Spleen (tissue), 13 donors: ENCODE measurements at regions of chr20 and their contacts with region 1.

Region 1: DNA sequence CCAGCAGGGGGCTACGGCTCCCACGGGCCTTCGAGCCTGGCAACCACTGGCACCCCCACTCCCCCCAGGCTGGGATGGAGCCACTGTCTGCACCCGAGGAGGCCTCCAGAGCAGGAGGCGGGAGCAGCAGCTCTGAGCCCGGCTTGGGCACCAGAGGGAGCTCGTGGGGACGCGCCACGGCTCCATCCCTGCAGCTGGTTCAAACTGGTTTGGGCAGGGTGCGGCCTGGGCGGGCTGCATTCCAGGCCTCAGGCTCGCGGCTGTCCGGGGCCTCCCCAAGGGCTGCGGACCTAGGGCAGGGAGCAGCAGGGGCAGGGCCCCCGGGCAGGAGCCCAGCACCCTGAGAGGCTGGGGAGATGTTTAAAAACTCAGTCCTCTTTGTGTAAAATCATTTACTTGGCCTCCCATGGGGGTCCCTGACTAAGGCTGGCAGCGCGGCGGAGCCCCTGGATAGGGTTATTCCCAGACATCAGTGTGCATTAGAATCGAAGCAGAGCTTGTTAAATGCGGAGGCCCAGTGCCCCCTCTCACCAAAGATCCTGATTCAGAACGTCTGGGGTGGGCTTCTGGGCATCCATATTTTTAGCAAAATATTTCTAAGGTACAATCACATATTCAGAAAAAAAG is 4.1 kb upstream of the BCAS4 start:
- DNase-seq: peak; percentile 95
- H3K4me3 ChIP-seq: peak overlapping the region in 1 of 8 donors; percentile 55
- H3K27ac ChIP-seq: peak overlapping the region; percentile 14 to 86 (median 74)
- H3K4me1 ChIP-seq: peaks cover 12 to 44% (median 28%) of the 10 kb centered on the region in 6 donors
- H3K27me3 ChIP-seq: peaks cover 0 to 6% (median 0%) of the 10 kb centered on the region in 7 donors
- CTCF ChIP-seq: peak; percentile 44 to 86 (median 74)
- POLR2A ChIP-seq: no peak

Region 2: GRCh38 chr20:50929299-50930138 is 138.8 kb after region 1 on chr20:
- intact Hi-C with region 1: loop called (anchors 5 kb)
- DNase-seq: peak; percentile 95
- H3K4me3 ChIP-seq: peak overlapping the region; percentile 70 to 95 (median 83)
- H3K27ac ChIP-seq: peak overlapping the region; percentile 70 to 99 (median 99)
- H3K4me1 ChIP-seq: peaks cover 27 to 71% (median 62%) of the 10 kb centered on the region in 6 donors
- H3K27me3 ChIP-seq: no peaks in the 10 kb centered on the region
- CTCF ChIP-seq: peak; percentile 83 to 94 (median 91)
- POLR2A ChIP-seq: no peak